Transverse colon (tissue), 4 donors: ENCODE measurements at regions of chr9 and their contacts with region 1.

Region 1: GRCh38 chr9:99221621-99222415 is at the starts of genes ALG2 and SEC61B:
- DNase-seq: peak; percentile 96
- H3K4me3 ChIP-seq: peak within 1 kb of the TSS; percentile 76 to 97 (median 87)
- H3K27ac ChIP-seq: peak within 1 kb of the TSS; percentile 89 to 96 (median 94)
- H3K4me1 ChIP-seq: peaks cover 16 to 47% (median 34%) of the 10 kb centered on the region in 4 donors
- H3K27me3 ChIP-seq: no peaks in the 10 kb centered on the region
- CTCF ChIP-seq: peak in 2 of 5 experiments; percentile 12 to 36
- EP300 ChIP-seq: no peak
- POLR2A ChIP-seq: peak; percentile 89
- total RNA-seq, gene ALG2: 7.9 to 38.4 (median 22.3) TPM
- total RNA-seq, gene SEC61B: 10.1 to 72.5 (median 42.0) TPM

Region 2: DNA sequence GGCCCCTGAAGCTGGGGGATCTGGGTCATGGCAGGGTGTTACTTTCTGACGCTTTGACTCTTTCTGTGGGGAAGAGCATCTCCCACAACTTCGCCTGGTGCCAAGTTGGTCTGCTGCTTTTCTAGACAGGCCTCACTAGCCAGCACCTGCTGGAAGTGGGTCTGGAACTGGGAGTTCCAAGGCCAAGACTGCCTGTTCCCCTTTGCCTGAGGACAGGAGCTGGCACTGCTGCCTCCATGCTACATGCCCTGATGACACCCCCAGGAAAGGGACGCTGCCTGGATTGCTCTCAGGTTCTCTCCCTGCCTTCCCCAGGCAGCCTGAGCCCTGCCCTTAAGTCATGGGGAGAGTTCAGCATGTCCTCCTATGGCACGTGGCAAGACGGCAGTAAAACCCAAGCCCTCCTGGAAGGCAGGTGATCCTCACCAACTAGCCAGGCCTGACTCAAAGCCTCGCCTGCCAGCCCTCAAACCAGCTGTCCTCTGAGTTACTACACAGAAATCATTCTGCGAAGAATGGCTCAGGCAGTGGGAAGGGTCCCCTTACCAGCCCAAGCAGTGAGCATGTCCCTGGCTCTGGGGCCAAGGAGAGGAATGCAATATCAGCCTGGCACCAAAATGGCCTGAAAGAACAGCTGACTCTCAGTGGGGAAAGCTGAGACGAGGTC is 36.0 kb after region 1 on chr9:
- in situ Hi-C with region 1: no loop called
- intact Hi-C with region 1: loop called (anchors 1 kb)
- DNase-seq: no peak
- H3K4me3 ChIP-seq: no peak overlapping the region
- H3K27ac ChIP-seq: no peak overlapping the region
- H3K4me1 ChIP-seq: peaks cover 0 to 12% (median 3%) of the 10 kb centered on the region in 4 donors
- H3K27me3 ChIP-seq: no peaks in the 10 kb centered on the region
- CTCF ChIP-seq: no peak
- EP300 ChIP-seq: no peak
- POLR2A ChIP-seq: no peak

Region 3: GRCh38 chr9:99353408-99353807 is 131.6 kb after region 1 on chr9:
- in situ Hi-C with region 1: no loop called
- intact Hi-C with region 1: no loop called
- DNase-seq: no peak
- H3K4me3 ChIP-seq: no peak overlapping the region
- H3K27ac ChIP-seq: peak overlapping the region; percentile 30 to 45 (median 38)
- H3K4me1 ChIP-seq: no peaks in the 10 kb centered on the region
- H3K27me3 ChIP-seq: no peaks in the 10 kb centered on the region
- CTCF ChIP-seq: no peak
- EP300 ChIP-seq: no peak
- POLR2A ChIP-seq: no peak